Activated B cell treated with CpG ODN at 0.5 μM for 24 hours (primary cell): ENCODE measurements at regions of chr15 and their contacts with region 1.

Region 1: DNA sequence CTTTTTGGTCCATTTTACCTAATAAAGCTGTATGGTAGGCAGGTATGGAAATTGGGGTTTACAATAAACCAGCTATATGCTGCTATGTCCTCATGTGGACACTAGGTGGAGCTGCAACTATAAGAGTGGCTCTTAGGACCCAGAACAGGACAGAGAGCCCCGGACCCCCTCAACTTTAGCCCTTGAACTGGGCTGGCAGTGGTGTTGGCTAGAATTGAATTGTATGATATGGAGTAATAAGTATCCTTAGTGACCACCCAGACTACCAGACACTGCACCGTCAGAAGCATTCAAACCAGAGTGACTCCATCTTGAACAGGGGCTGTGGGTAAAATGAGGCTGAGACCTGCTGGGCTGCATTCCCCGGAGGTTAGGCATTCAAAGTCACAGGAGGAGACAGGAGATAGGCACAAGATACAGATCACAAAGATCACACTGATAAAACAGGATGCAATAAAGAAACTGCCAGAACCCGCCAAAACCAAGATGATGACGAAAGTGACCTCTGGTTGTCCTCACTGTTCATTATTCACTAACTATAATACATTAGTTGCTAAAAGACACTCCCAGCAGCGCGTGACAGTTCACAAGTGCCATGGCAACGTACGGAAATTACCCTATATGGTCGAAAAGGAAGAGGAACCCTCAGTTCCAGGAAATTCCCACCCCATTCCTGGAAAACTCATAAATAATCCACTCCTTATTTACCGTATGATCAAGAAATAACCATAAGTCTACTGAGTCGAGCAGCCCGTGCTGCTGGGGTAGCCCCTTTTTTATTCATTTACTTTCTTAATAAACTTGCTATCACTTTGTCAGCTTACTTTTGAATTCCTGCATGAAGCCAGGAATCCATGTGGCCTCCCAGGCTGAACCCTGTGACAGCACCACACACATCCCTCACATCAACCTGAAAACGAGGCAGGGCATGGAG is 68.7 kb upstream of the BLM start:
- DNase-seq: no peak
- ATAC-seq: peak; percentile 93
- H3K4me3 Mint-ChIP-seq: peak overlapping the region; percentile 39
- H3K27ac Mint-ChIP-seq: peak overlapping the region; percentile 43
- H3K4me1 Mint-ChIP-seq: peaks cover 7% of the 10 kb centered on the region
- H3K27me3 Mint-ChIP-seq: peaks cover 4% of the 10 kb centered on the region
- CTCF ChIP-seq: no peak

Region 2: GRCh38 chr15:90660195-90660998 is 12.0 kb after region 1 on chr15:
- CTCF ChIA-PET with region 1: interaction called, 7 read pairs
- POLR2A ChIA-PET with region 1: interaction called, 13 read pairs
- intact Hi-C with region 1: loop called (anchors 1 kb)
- DNase-seq: peak; percentile 51
- ATAC-seq: peak; percentile 90
- H3K4me3 Mint-ChIP-seq: peak overlapping the region; percentile 81
- H3K27ac Mint-ChIP-seq: peak overlapping the region; percentile 91
- H3K4me1 Mint-ChIP-seq: peaks cover 76% of the 10 kb centered on the region
- H3K27me3 Mint-ChIP-seq: peaks cover 19% of the 10 kb centered on the region
- CTCF ChIP-seq: no peak

Region 3: DNA sequence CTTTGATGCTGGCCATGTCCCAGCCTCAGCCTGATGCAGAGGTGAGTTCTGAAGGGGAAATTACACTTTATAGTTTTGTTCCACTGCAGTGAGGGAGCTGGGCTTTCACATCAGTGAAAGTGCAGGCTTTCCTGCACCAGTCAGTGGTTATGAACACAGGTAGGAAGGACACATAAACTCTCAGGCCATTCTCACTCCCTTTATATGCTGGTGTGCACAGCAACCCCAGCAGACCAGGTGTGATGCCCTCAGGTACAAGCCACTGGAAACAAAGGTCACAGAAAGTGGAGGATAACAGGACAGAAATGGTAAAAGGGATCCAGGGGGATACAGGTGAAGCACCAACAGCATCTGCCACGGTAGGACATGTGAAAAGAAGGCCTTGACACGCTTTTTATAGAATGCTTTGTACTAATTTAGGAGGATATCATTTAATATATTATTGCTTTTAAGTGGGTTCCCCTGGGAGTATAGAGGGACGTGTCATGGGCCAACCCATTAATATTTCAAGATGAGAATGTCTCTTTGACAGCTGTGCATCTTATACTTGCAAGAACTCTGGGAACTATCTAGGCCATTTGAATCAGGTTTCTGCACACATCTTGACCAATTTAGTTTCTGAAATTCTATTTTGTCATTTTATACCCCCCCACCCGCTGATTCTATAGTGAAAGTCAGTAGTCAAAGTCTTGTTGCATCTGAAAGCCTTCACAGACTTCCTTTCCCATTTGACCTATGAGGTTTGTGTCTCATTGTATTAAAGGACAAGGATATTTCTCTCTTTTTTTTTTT is 43.8 kb after region 1 on chr15:
- CTCF ChIA-PET with region 1: interaction called, 46 read pairs
- POLR2A ChIA-PET with region 1: interaction called, 4 read pairs
- intact Hi-C with region 1: loop called (anchors 1 kb)
- DNase-seq: no peak
- ATAC-seq: no peak
- H3K4me3 Mint-ChIP-seq: no peak overlapping the region
- H3K27ac Mint-ChIP-seq: no peak overlapping the region
- H3K4me1 Mint-ChIP-seq: no peaks in the 10 kb centered on the region
- H3K27me3 Mint-ChIP-seq: no peaks in the 10 kb centered on the region
- CTCF ChIP-seq: no peak

Region 4: GRCh38 chr15:90716976-90717821 is 68.8 kb after region 1 on chr15 and contains the start of gene BLM:
- CTCF ChIA-PET with region 1: interaction called, 8 read pairs
- POLR2A ChIA-PET with region 1: interaction called, 5 read pairs
- intact Hi-C with region 1: loop called (anchors 2 kb)
- DNase-seq: peak; percentile 87
- ATAC-seq: peak; percentile 99
- H3K4me3 Mint-ChIP-seq: peak within 1 kb of the TSS; percentile 96
- H3K27ac Mint-ChIP-seq: peak within 1 kb of the TSS; percentile 94
- H3K4me1 Mint-ChIP-seq: peaks cover 30% of the 10 kb centered on the region
- H3K27me3 Mint-ChIP-seq: no peaks in the 10 kb centered on the region
- CTCF ChIP-seq: no peak
- total RNA-seq, gene BLM: 18.2 and 23.4 TPM in 2 replicates

Region 5: DNA sequence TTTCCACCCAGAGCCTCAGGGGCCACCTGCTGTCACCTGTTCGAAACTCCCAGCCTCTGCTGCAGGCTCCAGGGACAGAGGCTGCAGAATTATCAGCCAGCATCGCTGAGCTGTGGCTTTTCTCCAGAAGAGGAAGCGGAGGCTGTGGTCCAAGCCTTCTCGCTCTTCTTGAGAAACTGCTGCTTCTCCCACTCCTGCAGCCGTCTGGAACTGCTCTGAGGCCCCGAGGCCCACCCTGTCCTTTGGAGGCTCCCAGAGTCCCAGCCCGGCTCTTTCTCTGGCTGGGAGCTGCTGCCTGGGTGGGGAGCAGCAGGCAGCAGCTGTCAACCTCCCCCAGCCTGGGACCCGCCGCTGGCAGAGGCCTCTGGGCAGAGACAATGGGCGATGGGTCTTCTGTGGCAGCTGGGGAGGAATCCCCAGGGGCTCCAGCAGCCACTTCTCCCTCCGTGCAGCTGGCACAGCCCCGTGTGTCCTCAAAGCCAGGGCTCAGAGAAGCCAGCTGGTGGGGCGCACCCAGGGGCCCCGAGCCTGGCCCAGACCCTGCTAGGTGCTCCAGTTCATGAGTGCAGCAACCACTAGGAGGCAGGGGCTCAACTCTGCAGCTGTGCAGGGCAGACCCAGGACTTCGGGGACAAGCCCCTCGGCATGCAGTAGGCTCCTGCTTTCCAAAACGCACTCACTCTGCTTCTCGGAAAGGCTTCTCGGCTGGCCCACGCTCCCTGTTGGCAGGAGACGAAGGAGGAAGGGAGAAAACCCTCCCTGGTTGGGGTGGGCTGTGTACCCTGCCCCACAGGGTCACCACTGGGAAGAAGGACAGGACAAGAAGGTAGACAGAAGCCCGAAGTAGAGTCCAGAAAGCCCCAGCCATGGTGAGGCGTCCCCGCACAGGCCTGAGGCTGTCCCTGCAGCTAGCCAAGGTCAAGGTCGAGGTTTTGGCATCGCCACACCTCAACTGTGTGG is 170.1 kb after region 1 on chr15:
- CTCF ChIA-PET with region 1: interaction called, 5 read pairs
- POLR2A ChIA-PET with region 1: no interaction called
- intact Hi-C with region 1: loop called (anchors 1 kb)
- DNase-seq: peak; percentile 60
- ATAC-seq: peak; percentile 95
- H3K4me3 Mint-ChIP-seq: peak overlapping the region; percentile 41
- H3K27ac Mint-ChIP-seq: peak overlapping the region; percentile 66
- H3K4me1 Mint-ChIP-seq: peaks cover 46% of the 10 kb centered on the region
- H3K27me3 Mint-ChIP-seq: no peaks in the 10 kb centered on the region
- CTCF ChIP-seq: no peak

Region 6: DNA sequence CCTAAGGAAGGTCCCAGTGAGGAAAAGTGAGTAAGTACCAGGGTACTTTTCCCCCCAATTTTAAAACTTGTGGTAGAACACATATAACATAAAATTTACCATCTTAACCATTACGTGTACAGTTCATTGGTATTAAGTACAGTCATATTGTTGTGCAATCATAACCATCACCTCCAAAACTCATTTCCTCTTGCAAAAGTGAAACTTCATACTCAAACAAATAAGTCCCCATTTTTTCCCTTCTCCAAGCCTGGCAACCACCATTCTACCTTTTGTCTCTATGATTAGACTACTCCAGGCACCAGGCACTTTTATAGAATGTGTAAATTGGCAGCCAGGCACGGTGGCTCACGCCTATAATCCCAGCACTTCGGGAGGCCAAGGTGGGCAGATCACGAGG is 333.7 kb after region 1 on chr15:
- CTCF ChIA-PET with region 1: no interaction called
- POLR2A ChIA-PET with region 1: no interaction called
- intact Hi-C with region 1: no loop called
- DNase-seq: no peak
- ATAC-seq: peak; percentile 43
- H3K4me3 Mint-ChIP-seq: peak overlapping the region; percentile 21
- H3K27ac Mint-ChIP-seq: peak overlapping the region; percentile 77
- H3K4me1 Mint-ChIP-seq: peaks cover 32% of the 10 kb centered on the region
- H3K27me3 Mint-ChIP-seq: no peaks in the 10 kb centered on the region
- CTCF ChIP-seq: no peak

Region 7: GRCh38 chr15:91165850-91166249 is 517.4 kb after region 1 on chr15:
- CTCF ChIA-PET with region 1: no interaction called
- POLR2A ChIA-PET with region 1: no interaction called
- intact Hi-C with region 1: no loop called
- DNase-seq: no peak
- ATAC-seq: no peak
- H3K4me3 Mint-ChIP-seq: no peak overlapping the region
- H3K27ac Mint-ChIP-seq: no peak overlapping the region
- H3K4me1 Mint-ChIP-seq: no peaks in the 10 kb centered on the region
- H3K27me3 Mint-ChIP-seq: peaks cover 2% of the 10 kb centered on the region
- CTCF ChIP-seq: no peak